ENCODE measurements at regions of chr4 and their contacts with region 1.

Region 1: DNA sequence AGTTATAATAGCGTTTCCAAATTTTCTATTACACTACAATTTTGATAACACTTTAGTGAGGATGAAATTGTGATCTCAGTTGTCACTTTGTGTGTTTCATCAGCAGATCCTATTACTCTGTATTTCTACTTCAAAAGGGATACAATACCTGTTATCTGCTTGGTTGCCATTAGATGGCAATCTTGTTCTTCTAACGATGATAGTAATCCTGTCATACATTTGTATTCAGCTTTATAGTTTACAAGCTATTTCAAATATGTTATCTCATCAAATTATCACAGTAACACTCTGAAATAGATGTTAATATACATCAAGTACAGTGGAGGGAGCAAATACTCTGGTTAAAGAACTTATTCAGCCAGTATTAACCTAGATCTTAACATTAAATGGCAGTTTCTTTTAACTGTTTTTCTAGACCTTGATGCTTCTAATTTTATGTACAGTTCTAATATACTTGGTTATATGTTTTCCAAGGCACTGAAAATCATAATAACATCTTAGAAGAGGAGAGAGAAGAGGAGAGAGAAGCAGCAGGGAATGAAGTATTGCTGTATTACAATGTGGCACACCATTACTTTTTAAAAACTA is 292.0 kb downstream of the CCSER1 start:
- DNase-seq: peak; percentile 42
- H3K4me3 ChIP-seq: no peak overlapping the region
- H3K27ac ChIP-seq: no peak overlapping the region
- H3K4me1 ChIP-seq: no peaks in the 10 kb centered on the region
- H3K27me3 ChIP-seq: no peaks in the 10 kb centered on the region
- CTCF ChIP-seq: peak; percentile 59

Region 2: GRCh38 chr4:90328558-90328957 is 90.7 kb before region 1 on chr4:
- CTCF ChIA-PET with region 1: no interaction called
- POLR2A ChIA-PET with region 1: no interaction called
- intact Hi-C with region 1: no loop called
- DNase-seq: peak; percentile 45
- H3K4me3 ChIP-seq: no peak overlapping the region
- H3K27ac ChIP-seq: no peak overlapping the region
- H3K4me1 ChIP-seq: no peaks in the 10 kb centered on the region
- H3K27me3 ChIP-seq: no peaks in the 10 kb centered on the region
- CTCF ChIP-seq: no peak

Region 3: GRCh38 chr4:91108751-91109150 is 689.5 kb after region 1 on chr4:
- CTCF ChIA-PET with region 1: no interaction called
- POLR2A ChIA-PET with region 1: no interaction called
- intact Hi-C with region 1: loop called (anchors 5 kb)
- DNase-seq: no peak
- H3K4me3 ChIP-seq: no peak overlapping the region
- H3K27ac ChIP-seq: no peak overlapping the region
- H3K4me1 ChIP-seq: no peaks in the 10 kb centered on the region
- H3K27me3 ChIP-seq: no peaks in the 10 kb centered on the region
- CTCF ChIP-seq: no peak

Region 4: DNA sequence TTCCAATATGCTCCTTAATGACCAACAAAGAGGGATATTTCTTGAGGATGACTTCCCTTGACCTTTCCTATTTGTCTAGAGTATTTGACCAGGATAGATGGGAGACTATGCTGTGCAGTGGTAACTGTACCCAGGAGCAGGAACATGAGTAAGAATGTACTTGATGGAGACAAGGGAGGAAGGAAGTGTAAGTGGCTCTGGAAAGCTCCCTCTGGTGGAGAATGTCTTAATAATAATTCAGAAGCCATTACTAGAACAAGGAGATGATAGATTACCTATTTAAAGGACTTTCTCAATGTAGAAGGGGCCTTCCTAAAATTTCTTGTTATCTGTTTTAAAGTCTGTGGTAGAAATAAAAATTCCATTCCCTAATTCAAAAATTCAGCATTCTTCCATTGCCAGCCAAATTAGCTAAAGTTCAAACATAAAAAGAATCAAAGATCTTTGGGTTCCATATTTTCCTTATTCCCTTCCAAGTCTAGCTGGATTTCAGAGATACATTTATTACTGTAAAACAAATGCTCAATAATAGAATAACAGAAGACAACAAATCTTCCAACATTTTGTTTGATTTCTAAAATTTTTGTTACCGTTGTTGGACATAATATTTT is 1968.3 kb after region 1 on chr4:
- CTCF ChIA-PET with region 1: no interaction called
- POLR2A ChIA-PET with region 1: no interaction called
- intact Hi-C with region 1: loop called (anchors 5 kb)
- DNase-seq: peak; percentile 32
- H3K4me3 ChIP-seq: no peak overlapping the region
- H3K27ac ChIP-seq: no peak overlapping the region
- H3K4me1 ChIP-seq: no peaks in the 10 kb centered on the region
- H3K27me3 ChIP-seq: no peaks in the 10 kb centered on the region
- CTCF ChIP-seq: peak; percentile 58